ENCODE measurements at regions of chr1 and their contacts with region 1.

Region 1: GRCh38 chr1:91569411-91570119 is 68.9 kb downstream of the CDC7 start:
- DNase-seq: peak; percentile 80 to 85
- ATAC-seq: peak; percentile 90 to 99 (median 96)
- H3K4me3 ChIP-seq: no peak overlapping the region
- H3K27ac ChIP-seq: peak overlapping the region; percentile 7 to 88 (median 80)
- H3K4me1 ChIP-seq: peaks cover 0 to 47% (median 33%) of the 10 kb centered on the region in 9 donors
- H3K27me3 ChIP-seq: no peaks in the 10 kb centered on the region
- CTCF ChIP-seq: no peak

Region 2: DNA sequence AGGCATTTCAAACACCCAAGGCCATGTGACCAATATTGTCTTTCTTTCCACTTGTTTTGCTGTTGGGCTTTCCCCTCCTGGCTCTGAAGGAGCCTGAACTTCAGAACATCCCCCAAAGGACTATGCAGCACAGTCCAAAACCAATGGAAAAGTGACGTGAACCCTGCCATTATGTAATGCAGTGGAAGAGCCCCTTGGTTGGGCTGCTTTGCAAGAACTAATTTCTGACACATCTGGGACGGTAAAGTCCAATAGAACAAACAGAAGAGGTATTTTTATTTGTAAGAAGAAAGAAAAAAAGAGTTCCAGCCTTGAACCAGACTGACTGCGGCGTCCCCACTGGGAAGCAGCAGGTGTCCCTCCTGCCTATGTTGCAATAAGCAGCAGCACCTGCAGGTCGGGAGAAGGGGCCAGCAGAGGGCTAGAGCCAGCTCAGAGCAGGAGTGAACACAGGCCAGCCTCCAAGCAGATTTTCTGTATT is 47.8 kb after region 1 on chr1:
- intact Hi-C with region 1: loop called in 1 of 10 experiments (anchors 5 kb)
- DNase-seq: peak; percentile 32 to 44
- ATAC-seq: peak in 7 of 8 donors; percentile 46 to 91 (median 83)
- H3K4me3 ChIP-seq: no peak overlapping the region
- H3K27ac ChIP-seq: peak overlapping the region in 3 of 10 donors; percentile 10 to 29 (median 17)
- H3K4me1 ChIP-seq: peaks cover 0 to 24% (median 3%) of the 10 kb centered on the region in 9 donors
- H3K27me3 ChIP-seq: no peaks in the 10 kb centered on the region
- CTCF ChIP-seq: peak in 5 of 9 donors; percentile 12 to 45 (median 33)